Activated T-helper 1 cell treated with anti-CD3 and anti-CD28 coated beads, Interleukin-12 subunit alpha, Interleukin-12 subunit beta, Interleukin-2, Interleukin-4 antibody, amounts not matched to agents 30 ng/mL and 10 ng/mL and 1 ng/mL, durations not matched to agents 14 hours and 24 hours and 36 hours (primary cell): ENCODE measurements at regions of chr15 and their contacts with region 1.

Region 1: DNA sequence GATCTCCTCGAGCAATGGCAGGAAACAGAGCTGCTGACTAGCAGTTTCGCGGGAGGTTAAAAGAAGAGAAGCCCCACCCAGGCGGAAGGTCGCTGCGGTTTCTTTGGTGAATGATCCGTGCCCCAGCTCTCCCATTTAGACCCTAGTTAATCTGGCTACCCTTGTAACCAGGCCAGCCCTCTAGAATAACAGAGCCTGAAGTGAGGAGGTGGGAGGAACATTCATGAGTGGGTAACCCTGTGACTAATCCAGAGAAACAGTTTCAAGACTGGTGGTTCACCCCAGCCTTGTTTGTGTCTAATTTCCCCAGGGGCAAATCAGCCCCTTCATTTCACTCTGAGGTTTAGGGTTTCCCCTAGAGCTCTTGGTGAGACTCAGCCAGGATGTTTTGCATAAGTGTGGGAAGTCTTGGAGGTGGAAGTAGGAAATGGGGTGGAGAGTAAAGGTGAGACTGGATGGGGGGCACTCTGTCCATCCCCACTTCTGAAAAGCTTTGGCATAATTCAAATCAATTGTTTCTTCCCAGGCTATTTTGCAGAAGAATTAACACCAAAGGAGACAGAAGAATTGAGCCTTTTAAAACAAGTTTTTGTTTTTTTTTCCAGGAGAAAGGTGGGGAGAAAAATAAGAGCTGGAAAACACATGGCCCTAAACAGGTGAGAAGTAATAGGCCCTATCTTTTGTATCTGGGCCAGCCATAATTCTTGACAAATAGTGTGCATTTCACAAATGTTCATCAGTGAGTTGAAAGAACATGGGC is 303.1 kb downstream of the RPLP1 start:
- DNase-seq: peak; percentile 79
- H3K4me3 Mint-ChIP-seq: peak overlapping the region; percentile 70
- H3K27ac Mint-ChIP-seq: peak overlapping the region; percentile 87
- H3K4me1 Mint-ChIP-seq: peaks cover 72% of the 10 kb centered on the region
- H3K27me3 Mint-ChIP-seq: peaks cover 2% of the 10 kb centered on the region

Region 2: GRCh38 chr15:68820295-68821189 is 935.2 kb before region 1 on chr15 and contains the start of gene ANP32A:
- intact Hi-C with region 1: loop called (anchors 10 kb)
- DNase-seq: peak; percentile 94
- H3K4me3 Mint-ChIP-seq: peak within 1 kb of the TSS; percentile 98
- H3K27ac Mint-ChIP-seq: peak within 1 kb of the TSS; percentile 100
- H3K4me1 Mint-ChIP-seq: peaks cover 40% of the 10 kb centered on the region
- H3K27me3 Mint-ChIP-seq: no peaks in the 10 kb centered on the region
- total RNA-seq, gene ANP32A: 275 TPM in 2 replicates

Region 3: DNA sequence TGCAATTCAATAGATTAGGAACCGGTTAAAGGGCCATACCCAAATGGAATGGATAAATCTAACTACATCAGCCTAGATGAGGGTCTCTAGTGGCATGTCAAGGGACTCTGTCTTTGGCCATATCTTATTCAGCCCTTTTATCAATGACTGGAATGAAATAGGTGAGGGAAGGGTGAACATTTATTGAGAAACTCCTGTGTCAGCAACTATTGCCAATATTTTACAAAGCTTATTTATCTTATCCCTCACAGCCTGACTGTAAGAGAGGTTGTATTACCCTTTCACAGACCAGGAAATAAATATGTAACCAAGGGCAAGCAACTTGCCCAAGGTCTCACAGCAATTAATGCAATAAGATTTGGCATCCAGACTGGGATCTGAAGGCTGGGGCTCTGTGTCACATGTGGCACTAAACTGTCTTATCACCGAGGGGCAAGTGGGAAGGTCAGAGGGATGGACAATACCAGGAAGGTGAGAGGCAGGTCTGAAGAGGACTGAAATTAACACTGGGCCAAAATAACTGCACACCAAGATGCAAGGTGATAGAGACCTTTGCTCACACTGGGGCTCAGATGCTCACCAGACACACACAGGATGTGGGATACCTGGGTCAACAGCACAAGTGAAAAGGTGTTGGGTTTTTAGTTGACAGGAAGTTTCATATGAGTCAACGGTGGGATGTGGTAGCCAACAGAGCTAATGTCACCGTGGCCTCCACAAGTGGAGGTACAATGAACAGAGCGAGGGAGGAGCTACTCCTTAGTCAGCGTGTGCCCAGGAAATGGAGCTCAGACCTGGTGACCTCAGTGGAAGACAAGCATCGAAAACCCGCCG is 41.8 kb before region 1 on chr15:
- intact Hi-C with region 1: loop called (anchors 1 kb)
- DNase-seq: peak; percentile 79
- H3K4me3 Mint-ChIP-seq: peak overlapping the region; percentile 40
- H3K27ac Mint-ChIP-seq: peak overlapping the region; percentile 85
- H3K4me1 Mint-ChIP-seq: peaks cover 49% of the 10 kb centered on the region
- H3K27me3 Mint-ChIP-seq: peaks cover 19% of the 10 kb centered on the region

Region 4: GRCh38 chr15:69743091-69743490 is 12.6 kb before region 1 on chr15:
- intact Hi-C with region 1: loop called (anchors 2 kb)
- DNase-seq: no peak
- H3K4me3 Mint-ChIP-seq: no peak overlapping the region
- H3K27ac Mint-ChIP-seq: no peak overlapping the region
- H3K4me1 Mint-ChIP-seq: peaks cover 31% of the 10 kb centered on the region
- H3K27me3 Mint-ChIP-seq: peaks cover 15% of the 10 kb centered on the region

Region 5: DNA sequence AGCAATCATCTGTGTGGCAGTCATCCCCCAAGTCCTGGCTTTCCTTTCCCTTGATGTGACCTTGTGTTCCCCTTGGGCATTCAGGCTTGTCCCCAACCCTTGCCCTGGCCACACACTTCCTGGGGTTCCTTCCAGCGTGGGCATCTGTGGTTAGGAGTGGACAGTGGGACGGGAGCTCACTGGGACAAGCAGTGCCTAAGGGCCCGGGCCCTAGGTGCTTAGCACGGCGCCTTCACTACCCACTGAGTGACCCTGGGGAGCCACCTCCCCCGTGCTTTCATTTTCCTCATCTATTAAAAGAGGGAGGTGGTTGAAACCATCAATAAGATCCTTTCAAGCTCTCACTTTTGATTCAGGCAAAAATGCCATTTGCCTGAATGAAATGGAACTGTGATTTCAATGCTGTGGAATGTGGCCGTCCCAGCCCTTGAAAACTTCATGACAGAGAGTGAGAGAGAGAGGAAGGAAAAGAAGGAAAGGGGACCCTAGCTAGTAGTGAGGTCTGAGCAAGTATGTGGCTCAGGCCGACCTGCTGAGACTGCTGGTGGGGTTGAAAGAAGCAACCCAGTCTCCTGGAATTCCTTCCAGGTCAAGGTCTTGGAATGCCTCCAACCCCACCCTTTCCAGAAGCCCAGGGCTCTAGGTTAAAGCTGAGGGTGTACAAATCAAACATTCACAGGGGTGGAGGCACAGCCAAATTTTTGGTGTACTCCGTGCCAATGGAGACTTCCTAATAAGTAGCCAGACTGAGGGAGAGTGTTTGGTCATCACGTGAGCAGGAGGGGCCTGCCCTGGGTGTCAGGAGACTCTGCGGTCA is 39.1 kb after region 1 on chr15:
- intact Hi-C with region 1: no loop called
- DNase-seq: no peak
- H3K4me3 Mint-ChIP-seq: no peak overlapping the region
- H3K27ac Mint-ChIP-seq: no peak overlapping the region
- H3K4me1 Mint-ChIP-seq: no peaks in the 10 kb centered on the region
- H3K27me3 Mint-ChIP-seq: peaks cover 17% of the 10 kb centered on the region

Region 6: GRCh38 chr15:70023064-70023768 is 267.5 kb after region 1 on chr15:
- intact Hi-C with region 1: loop called (anchors 1 kb)
- DNase-seq: peak; percentile 64
- H3K4me3 Mint-ChIP-seq: peak overlapping the region; percentile 65
- H3K27ac Mint-ChIP-seq: peak overlapping the region; percentile 86
- H3K4me1 Mint-ChIP-seq: peaks cover 19% of the 10 kb centered on the region
- H3K27me3 Mint-ChIP-seq: peaks cover 21% of the 10 kb centered on the region

Region 7: DNA sequence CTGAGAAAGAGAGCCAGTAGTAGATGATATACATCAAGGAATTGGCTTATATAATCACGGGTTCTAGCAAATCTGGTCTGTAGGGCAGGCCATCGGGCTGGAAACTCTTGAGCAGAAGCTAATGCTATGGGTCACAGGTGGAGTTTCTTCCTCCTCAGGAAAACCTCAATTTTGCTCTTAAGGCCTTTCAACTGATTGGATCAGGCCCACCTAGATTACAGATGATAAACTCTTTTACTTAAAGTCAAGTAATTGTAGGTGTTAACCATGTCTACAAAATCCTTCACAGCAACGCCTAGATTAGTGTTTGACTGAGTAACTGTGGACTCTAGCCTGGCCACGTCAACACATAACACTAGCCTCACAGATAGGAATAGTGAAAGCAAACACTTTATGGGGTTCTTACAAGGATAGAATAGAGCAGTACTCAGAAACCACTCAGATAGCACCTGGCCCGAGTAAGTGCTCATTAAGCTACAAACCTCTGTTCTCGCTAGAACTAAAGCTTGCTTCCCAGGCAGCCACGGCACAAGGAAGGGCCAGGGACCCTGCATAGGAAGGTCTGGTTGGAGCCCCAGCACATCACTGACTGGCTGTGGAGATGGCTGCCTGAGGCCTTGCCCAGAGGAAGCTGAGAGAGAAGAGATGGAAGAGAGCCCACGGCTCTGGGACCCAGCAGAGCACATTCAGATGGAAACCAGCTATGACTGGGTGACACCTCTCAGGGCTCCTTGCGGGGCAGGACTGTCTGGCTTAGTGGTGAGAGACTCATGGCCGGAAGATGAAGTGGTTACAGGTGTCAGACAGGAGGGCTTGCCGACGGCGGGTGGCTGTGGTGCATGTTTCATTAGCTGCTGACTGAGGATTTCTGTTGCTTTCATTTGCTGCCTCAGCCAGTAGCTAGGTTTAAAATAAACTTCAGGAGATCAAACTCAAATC is 544.5 kb after region 1 on chr15:
- intact Hi-C with region 1: loop called (anchors 5 kb)
- DNase-seq: peak; percentile 71
- H3K4me3 Mint-ChIP-seq: no peak overlapping the region
- H3K27ac Mint-ChIP-seq: peak overlapping the region; percentile 24
- H3K4me1 Mint-ChIP-seq: peaks cover 9% of the 10 kb centered on the region
- H3K27me3 Mint-ChIP-seq: peaks cover 22% of the 10 kb centered on the region

Region 8: GRCh38 chr15:70505411-70505919 is 749.7 kb after region 1 on chr15:
- intact Hi-C with region 1: loop called (anchors 5 kb)
- DNase-seq: no peak
- H3K4me3 Mint-ChIP-seq: peak overlapping the region; percentile 42
- H3K27ac Mint-ChIP-seq: peak overlapping the region; percentile 72
- H3K4me1 Mint-ChIP-seq: peaks cover 86% of the 10 kb centered on the region
- H3K27me3 Mint-ChIP-seq: peaks cover 7% of the 10 kb centered on the region